Activated CD4-positive, alpha-beta T cell treated with anti-CD3 and anti-CD28 coated beads, Interleukin-2, amount 10 ng/mL, durations not matched to agents 7 days and 5 days (primary cell): ENCODE measurements at regions of chr7 and their contacts with region 1.

Region 1: DNA sequence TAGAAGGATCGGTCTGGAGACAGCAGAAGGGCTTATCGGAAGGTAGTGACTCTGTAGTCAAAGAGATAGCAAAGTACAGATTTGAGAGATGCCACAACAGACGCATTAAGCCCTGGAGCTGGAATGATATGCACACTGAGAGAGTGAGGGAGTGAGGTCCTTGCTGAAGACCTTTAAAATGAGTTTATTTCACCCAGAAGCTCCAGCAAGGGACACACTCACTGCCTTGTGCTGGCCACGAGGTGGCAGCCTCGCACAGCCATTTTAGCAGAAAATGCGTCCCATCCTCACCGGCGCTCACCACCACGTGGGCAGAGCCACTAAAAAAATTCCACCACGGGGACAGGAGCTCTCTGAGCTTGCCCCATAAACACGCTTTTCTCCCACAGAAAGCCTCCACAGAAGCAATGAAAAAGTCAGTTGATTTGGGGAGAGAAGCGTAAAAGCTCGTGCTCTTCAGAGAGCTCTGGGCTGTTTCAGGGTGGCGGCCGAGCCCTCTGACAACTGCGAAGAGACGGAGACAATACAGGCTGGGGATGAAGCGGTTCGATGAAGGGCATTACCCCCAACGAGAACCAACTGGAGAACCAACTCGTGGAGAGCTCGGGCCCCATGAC is 163.0 kb upstream of the KLF14 start:
- DNase-seq: peak; percentile 80
- H3K4me3 Mint-ChIP-seq: no peak overlapping the region
- H3K27ac Mint-ChIP-seq: peak overlapping the region; percentile 66
- H3K4me1 Mint-ChIP-seq: peaks cover 81% of the 10 kb centered on the region
- H3K27me3 Mint-ChIP-seq: no peaks in the 10 kb centered on the region

Region 2: GRCh38 chr7:130752424-130752823 is 144.6 kb before region 1 on chr7:
- CTCF ChIA-PET with region 1: no interaction called
- POLR2A ChIA-PET with region 1: no interaction called
- DNase-seq: no peak
- H3K4me3 Mint-ChIP-seq: no peak overlapping the region
- H3K27ac Mint-ChIP-seq: no peak overlapping the region
- H3K4me1 Mint-ChIP-seq: no peaks in the 10 kb centered on the region
- H3K27me3 Mint-ChIP-seq: peaks cover 38% of the 10 kb centered on the region

Region 3: DNA sequence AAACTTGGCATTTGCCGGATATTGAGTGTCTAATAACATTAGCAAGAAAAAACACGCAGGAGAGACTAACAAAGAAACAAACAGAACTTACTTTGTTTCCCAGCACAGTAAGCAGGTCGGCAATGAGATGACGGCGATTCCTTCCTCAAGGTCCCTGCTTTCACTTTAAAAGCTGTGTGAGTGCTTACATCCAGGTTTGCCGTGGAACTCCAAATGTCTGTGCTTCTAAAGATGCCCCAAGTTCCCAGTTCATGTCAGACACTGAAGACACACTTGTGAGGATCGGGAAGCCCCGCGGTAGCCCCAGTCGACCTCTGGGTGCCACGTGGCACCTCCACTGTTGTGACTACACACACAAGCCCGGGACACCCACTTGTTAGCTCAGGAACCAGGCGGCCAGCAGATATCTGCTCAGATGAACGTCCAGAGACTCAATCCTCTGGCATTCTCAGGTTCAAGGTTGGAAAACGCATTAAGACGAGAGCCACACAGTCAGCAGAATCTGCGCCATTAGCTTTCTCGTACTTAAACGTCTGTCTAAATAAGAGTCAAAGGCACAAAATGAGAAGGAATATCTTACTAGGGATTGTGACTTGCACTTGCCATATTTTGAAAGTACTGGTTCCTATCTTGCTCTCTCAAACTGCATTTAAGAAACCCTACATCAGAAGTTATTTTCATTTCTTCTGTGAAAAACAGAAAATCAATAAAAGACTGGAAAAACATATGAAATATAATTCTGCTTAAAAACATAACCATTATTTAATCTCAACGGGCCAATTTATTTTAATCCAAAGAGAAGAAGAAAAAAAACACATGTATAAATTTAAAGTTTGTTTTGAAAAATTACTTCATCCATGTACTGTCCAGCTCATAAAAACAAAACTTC is 44.6 kb after region 1 on chr7:
- CTCF ChIA-PET with region 1: interaction called, 11 read pairs
- POLR2A ChIA-PET with region 1: no interaction called
- DNase-seq: no peak
- H3K4me3 Mint-ChIP-seq: peak overlapping the region; percentile 62
- H3K27ac Mint-ChIP-seq: peak overlapping the region; percentile 79
- H3K4me1 Mint-ChIP-seq: peaks cover 86% of the 10 kb centered on the region
- H3K27me3 Mint-ChIP-seq: no peaks in the 10 kb centered on the region

Region 4: DNA sequence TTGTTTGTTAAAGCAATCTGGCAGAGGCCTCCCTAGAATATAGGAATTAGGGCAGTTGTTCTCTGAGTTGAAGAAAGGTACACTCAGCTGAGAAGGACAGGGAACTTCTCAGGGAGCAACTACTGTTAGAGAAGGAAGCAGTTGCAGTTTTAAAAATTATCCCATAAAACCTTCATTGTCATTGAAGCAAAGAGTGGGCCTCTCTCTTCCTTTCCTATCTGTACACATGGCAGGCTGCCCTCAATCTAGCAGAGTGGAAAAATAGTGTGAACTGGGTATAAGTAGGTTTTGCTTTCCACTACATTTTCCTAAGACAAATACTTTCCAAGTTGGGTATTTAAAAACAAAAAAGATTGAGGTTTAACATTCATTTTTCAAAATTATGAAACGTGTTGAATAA is 73.7 kb after region 1 on chr7:
- CTCF ChIA-PET with region 1: interaction called, 10 read pairs
- POLR2A ChIA-PET with region 1: no interaction called
- DNase-seq: no peak
- H3K4me3 Mint-ChIP-seq: no peak overlapping the region
- H3K27ac Mint-ChIP-seq: peak overlapping the region; percentile 72
- H3K4me1 Mint-ChIP-seq: peaks cover 71% of the 10 kb centered on the region
- H3K27me3 Mint-ChIP-seq: no peaks in the 10 kb centered on the region

Region 5: GRCh38 chr7:130982160-130982638 is 85.2 kb after region 1 on chr7:
- CTCF ChIA-PET with region 1: interaction called, 10 read pairs
- POLR2A ChIA-PET with region 1: no interaction called
- DNase-seq: peak; percentile 46
- H3K4me3 Mint-ChIP-seq: no peak overlapping the region
- H3K27ac Mint-ChIP-seq: no peak overlapping the region
- H3K4me1 Mint-ChIP-seq: peaks cover 33% of the 10 kb centered on the region
- H3K27me3 Mint-ChIP-seq: no peaks in the 10 kb centered on the region

Region 6: GRCh38 chr7:131040467-131040932 is 143.5 kb after region 1 on chr7:
- CTCF ChIA-PET with region 1: interaction called, 13 read pairs
- POLR2A ChIA-PET with region 1: no interaction called
- DNase-seq: peak; percentile 72
- H3K4me3 Mint-ChIP-seq: peak overlapping the region; percentile 33
- H3K27ac Mint-ChIP-seq: no peak overlapping the region
- H3K4me1 Mint-ChIP-seq: peaks cover 38% of the 10 kb centered on the region
- H3K27me3 Mint-ChIP-seq: no peaks in the 10 kb centered on the region